Activated naive CD4-positive, alpha-beta T cell treated with anti-CD3 and anti-CD28 coated beads for 36 hours (primary cell): ENCODE measurements at regions of chr7 and their contacts with region 1.

Region 1: DNA sequence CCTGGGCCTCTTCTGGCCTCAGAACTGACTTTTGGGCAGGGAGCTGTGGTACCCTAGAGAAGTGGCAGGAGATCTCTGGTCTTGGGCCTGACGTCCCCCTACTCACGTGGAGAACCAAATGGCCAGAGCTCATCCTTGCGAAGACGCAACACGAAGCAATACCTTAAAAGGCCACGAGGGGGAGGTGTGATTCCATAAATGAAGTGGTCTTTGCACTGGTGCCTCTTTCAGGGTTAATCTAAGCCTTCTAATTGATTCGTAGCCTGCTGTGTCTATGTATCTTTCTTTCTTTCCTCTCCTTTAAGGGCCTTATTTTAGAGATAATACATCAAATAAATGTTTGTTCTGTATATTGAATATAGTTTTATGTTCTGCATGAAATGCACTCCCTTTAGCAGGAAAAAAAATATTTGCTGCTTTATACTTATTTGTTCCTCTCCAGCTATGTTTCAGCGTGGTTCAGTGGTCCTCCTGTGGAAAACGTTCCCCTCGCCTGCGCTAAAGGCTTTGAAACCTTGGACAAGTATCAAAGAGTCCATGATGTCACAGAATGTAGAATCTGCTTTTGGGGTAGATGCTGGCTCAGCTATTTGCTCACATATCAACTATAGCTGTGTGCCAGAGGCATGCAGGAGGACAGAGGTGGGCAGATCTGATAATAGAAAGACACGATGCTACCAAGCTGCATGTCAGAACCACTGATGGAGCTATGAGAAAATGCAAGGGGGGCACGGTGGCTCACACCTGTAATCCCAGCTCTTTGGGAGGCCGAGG is 41.0 kb downstream of the STRA8 start:
- DNase-seq: peak; percentile 89
- H3K4me3 Mint-ChIP-seq: no peak overlapping the region
- H3K27ac Mint-ChIP-seq: no peak overlapping the region
- H3K4me1 Mint-ChIP-seq: peaks cover 3% of the 10 kb centered on the region
- H3K27me3 Mint-ChIP-seq: no peaks in the 10 kb centered on the region

Region 2: GRCh38 chr7:135260930-135261721 is 13.6 kb before region 1 on chr7:
- CTCF ChIA-PET with region 1: interaction called, 33 read pairs
- intact Hi-C with region 1: no loop called
- DNase-seq: no peak
- H3K4me3 Mint-ChIP-seq: no peak overlapping the region
- H3K27ac Mint-ChIP-seq: peak overlapping the region; percentile 21
- H3K4me1 Mint-ChIP-seq: no peaks in the 10 kb centered on the region
- H3K27me3 Mint-ChIP-seq: peaks cover 2% of the 10 kb centered on the region

Region 3: GRCh38 chr7:135286876-135287275 is 12.2 kb after region 1 on chr7:
- CTCF ChIA-PET with region 1: interaction called, 10 read pairs
- intact Hi-C with region 1: no loop called
- DNase-seq: no peak
- H3K4me3 Mint-ChIP-seq: no peak overlapping the region
- H3K27ac Mint-ChIP-seq: no peak overlapping the region
- H3K4me1 Mint-ChIP-seq: peaks cover 1% of the 10 kb centered on the region
- H3K27me3 Mint-ChIP-seq: no peaks in the 10 kb centered on the region

Region 4: DNA sequence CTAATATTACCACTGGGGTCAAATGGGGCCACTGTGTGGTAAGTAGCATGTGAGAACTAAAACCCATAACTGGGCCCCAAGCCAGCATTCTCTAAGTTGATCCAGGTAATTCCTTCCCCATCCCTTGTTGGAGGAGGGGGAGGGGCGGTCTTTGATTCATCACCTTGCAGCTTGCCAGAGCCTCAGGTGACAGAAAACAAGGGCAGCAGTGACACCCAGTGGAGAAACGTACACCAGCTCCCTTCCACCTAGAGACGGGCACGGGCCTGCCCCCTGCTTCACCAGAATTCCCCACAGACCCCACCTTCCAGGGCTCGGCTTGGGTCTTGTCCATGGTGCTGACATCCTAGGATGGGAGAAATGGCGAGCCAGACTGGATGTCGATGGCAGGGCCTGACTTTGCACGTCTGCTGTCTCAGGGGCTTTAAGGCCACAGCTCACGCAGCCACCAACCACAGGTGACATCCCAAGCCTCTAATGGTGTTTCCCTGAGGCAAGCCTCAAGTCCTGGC is 61.0 kb after region 1 on chr7:
- CTCF ChIA-PET with region 1: interaction called, 37 read pairs
- intact Hi-C with region 1: no loop called
- DNase-seq: peak; percentile 73
- H3K4me3 Mint-ChIP-seq: no peak overlapping the region
- H3K27ac Mint-ChIP-seq: no peak overlapping the region
- H3K4me1 Mint-ChIP-seq: peaks cover 2% of the 10 kb centered on the region
- H3K27me3 Mint-ChIP-seq: no peaks in the 10 kb centered on the region

Region 5: DNA sequence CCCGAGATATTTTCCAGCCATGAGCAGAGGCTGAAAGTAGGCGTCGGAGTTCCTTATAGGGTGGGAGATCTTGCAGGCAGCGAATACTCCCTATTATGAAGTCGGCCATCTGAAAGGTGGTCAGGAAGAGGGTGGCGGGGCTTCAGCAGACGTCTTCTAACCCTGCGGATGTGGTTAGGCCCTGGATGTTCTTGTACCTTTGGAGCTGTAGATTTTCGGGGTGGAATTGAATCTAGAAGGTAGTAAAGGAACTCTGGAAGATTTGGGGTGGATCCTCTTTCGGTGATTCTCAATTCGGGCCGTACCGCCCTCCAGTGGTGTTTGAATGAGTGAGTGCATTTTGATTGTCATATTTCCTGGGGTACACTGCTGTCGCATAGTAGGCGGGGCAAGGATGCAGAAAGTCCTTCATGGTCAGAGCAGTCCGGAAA is 283.7 kb after region 1 on chr7:
- CTCF ChIA-PET with region 1: interaction called, 6 read pairs
- intact Hi-C with region 1: loop called (anchors 1 kb)
- DNase-seq: peak; percentile 79
- H3K4me3 Mint-ChIP-seq: no peak overlapping the region
- H3K27ac Mint-ChIP-seq: no peak overlapping the region
- H3K4me1 Mint-ChIP-seq: peaks cover 29% of the 10 kb centered on the region
- H3K27me3 Mint-ChIP-seq: no peaks in the 10 kb centered on the region

Region 6: GRCh38 chr7:135645296-135645904 is 370.7 kb after region 1 on chr7:
- CTCF ChIA-PET with region 1: interaction called, 8 read pairs
- intact Hi-C with region 1: loop called (anchors 1 kb)
- DNase-seq: no peak
- H3K4me3 Mint-ChIP-seq: no peak overlapping the region
- H3K27ac Mint-ChIP-seq: no peak overlapping the region
- H3K4me1 Mint-ChIP-seq: no peaks in the 10 kb centered on the region
- H3K27me3 Mint-ChIP-seq: no peaks in the 10 kb centered on the region

Region 7: DNA sequence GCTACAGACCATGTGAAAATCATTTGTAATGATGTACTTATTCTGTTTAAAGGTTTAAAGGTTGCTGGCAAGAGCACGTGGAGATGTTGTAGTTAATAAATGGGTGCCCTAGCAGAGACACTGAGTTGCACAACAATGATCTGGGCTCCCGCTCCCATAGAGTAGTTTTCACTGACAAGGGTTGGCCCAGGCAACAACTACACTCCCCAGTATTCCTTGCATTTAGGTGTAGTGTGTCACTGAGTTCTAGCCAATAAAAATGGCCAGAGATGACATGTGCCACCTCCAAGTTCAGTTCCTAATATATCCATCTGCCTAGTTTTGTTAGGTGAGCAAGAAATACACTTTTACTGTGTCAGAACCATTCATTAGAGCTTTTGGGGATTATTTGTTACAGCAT is 1094.5 kb after region 1 on chr7:
- CTCF ChIA-PET with region 1: no interaction called
- intact Hi-C with region 1: no loop called
- DNase-seq: no peak
- H3K4me3 Mint-ChIP-seq: no peak overlapping the region
- H3K27ac Mint-ChIP-seq: no peak overlapping the region
- H3K4me1 Mint-ChIP-seq: no peaks in the 10 kb centered on the region
- H3K27me3 Mint-ChIP-seq: no peaks in the 10 kb centered on the region